Common myeloid progenitor, CD34-positive (primary cell): ENCODE measurements at regions of chr9 and their contacts with region 1.

Region 1: DNA sequence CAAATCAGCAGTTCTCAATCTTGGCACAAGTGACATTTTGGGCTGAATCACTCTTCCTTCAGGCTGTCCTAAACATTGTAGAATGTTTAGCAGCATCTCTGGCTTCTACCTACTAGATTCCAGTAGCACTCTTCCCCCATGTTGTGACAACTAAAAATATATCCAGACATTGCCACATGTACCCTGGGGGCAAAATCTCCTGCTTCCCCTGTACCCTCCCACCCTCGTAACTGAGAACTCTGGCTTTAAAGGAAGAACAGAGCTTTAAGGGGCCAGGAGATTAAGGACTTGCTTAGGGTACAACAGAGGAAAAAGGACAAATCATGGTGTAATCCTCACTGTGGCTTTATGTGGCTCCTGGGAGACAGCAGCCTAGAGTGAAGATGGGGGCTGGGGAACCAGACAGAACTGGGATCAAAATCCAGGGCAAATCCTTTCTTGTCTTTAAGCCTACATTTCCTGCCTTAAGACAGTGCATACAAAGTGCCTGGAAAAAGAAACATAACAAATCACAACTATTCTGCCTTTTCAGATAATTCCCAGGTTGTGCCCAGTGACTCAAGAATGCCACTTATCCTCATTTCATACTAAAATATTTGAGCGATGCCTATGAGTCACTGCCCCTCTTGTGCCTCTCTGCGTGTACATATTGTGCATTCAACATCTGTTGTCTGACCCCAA is 109.3 kb downstream of the DAPK1 start:
- DNase-seq: no peak
- H3K4me3 ChIP-seq: no peak overlapping the region
- H3K27ac ChIP-seq: no peak overlapping the region
- H3K4me1 ChIP-seq: peaks cover 3 to 65% (median 42%) of the 10 kb centered on the region in 4 experiments
- H3K27me3 ChIP-seq: no peaks in the 10 kb centered on the region

Region 2: GRCh38 chr9:87620731-87621322 is 13.8 kb after region 1 on chr9:
- CTCF ChIA-PET with region 1: interaction called, 14 read pairs
- POLR2A ChIA-PET with region 1: no interaction called
- DNase-seq: no peak
- H3K4me3 ChIP-seq: no peak overlapping the region
- H3K27ac ChIP-seq: no peak overlapping the region
- H3K4me1 ChIP-seq: peaks cover 2 to 32% (median 28%) of the 10 kb centered on the region in 4 experiments
- H3K27me3 ChIP-seq: no peaks in the 10 kb centered on the region